ENCODE measurements at regions of chr1 and their contacts with region 1.

Region 1: DNA sequence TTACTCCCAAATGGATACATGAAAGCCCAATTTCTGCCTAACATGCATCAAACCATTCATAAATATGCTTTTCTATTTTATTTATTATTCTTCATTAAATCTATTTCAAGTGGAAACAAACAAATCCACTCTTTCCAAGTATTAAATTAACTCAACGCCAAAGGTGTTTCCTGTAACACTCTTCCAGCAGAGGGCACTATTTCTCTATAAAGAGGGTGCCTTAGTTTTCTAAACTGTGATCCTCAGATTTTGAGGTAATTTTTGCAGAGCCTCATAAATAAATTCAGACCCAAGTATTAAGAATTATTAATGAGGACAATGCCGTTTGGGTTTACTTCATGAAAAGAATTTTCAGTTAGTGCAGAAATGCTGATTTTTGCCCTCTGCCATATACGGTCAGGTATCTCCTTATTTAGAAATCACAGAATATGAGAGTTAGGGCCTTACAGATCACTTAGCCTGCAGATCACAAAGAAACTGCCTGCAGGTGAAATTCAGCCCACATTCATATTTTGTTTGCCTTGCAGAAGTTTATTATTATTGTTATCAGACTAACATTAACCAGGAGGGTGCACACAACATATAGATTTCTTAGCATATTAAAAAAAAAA is 40.1 kb upstream of the MYSM1 start:
- DNase-seq: peak; percentile 69

Region 2: GRCh38 chr1:59718064-59718988 is 978.4 kb after region 1 on chr1:
- in situ Hi-C with region 1: loop called (anchors 25 kb)
- DNase-seq: no peak